Panc1 (cell line): ENCODE measurements at regions of chr7 and their contacts with region 1.

Region 1: DNA sequence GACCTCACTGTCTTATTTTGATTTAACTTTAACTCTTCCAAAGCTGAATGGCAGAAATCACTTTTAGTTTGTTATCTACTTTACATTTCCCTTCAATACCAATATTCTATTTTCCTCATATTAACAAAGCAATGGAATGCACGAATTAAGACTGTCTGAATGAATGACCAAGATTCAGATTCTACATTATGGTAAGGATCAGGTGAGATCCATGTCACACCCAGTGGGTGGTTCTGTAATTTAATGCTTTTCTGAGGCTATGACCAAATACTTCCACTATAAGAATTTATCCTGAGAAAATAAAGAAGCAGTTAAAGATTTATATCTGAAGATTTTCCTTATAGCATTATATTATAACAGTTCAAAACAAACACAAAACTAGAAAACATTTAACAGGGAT is 90.2 kb upstream of the NUPR2 start:
- DNase-seq: no peak
- ATAC-seq: no peak
- H3K4me3 ChIP-seq: no peak overlapping the region
- H3K27ac ChIP-seq: no peak overlapping the region
- H3K4me1 ChIP-seq: no peaks in the 10 kb centered on the region
- H3K27me3 ChIP-seq: 0 out of 2 replicates have a peak, but pooled peaks cover 2% of the 10 kb centered on the region
- CTCF ChIP-seq: no peak

Region 2: DNA sequence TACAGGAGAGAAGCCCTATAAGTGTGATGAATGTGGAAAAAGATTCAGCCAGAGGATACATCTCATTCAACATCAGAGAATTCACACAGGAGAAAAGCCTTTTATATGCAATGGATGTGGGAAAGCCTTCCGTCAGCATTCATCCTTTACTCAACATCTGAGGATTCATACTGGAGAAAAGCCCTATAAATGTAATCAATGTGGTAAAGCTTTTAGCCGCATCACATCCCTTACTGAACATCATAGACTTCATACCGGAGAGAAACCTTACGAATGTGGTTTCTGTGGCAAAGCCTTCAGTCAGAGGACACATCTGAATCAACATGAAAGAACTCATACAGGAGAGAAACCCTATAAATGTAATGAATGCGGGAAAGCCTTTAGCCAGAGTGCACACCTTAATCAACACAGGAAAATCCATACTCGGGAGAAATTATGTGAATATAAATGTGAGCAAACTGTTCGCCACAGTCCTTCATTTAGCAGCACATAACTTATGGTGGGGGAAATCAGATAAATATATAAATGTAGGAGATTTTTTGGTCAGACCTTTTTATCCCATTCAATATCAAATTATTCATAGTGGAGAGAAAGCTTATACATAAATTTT is 266.8 kb before region 1 on chr7:
- CTCF ChIA-PET with region 1: no interaction called
- POLR2A ChIA-PET with region 1: no interaction called
- in situ Hi-C with region 1: no loop called
- intact Hi-C with region 1: no loop called
- DNase-seq: no peak
- ATAC-seq: no peak
- H3K4me3 ChIP-seq: no peak overlapping the region
- H3K27ac ChIP-seq: no peak overlapping the region
- H3K4me1 ChIP-seq: no peaks in the 10 kb centered on the region
- H3K27me3 ChIP-seq: no peaks in the 10 kb centered on the region
- CTCF ChIP-seq: no peak

Region 3: DNA sequence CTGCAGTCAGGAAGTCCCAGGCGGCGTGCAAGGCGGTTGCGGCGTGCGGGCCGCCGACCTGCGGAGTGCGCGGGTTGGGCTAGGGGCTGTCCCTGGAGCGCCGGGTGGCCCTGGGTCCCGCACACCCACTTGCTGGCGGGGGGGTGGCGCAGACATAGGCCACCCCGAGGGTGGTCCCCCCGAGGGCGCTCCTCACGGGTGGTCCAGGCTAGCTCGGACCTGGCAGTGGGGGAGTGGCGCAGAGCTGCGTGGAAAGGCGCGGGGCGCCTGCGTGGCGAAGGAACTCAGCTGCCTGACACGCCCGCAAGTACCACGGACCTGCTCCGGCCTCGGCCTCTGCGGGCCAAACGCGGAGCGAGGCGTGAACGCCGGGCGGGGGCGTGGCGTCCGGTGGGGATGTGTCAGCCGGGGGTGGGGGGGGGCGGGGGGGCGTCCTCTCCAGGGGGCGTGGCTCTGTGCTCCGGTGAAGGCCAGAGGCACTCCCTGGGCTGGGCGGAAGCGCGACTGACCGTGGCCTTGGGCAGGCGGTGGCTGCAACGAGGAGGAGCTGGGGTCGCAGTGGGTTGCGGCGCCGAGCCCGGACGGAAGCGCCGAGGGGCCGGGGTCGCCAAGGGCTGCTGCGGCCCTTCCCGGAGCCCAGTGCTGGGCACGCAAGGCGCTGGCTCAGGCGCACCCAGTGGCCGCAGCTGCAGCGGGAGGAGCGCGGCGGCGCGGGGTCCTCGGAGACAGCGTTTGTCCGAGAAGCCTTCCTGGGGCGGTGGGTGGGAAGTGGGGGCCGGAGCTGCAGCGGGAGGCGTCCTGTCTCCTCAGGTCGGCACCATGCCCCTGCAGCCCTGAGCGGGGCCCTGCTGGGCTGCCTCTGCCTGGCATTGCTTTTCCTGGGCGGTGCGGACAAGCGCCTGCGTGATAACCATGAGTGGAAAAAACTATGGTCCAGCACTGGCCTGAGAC is 31.3 kb before region 1 on chr7:
- CTCF ChIA-PET with region 1: no interaction called
- POLR2A ChIA-PET with region 1: no interaction called
- in situ Hi-C with region 1: no loop called
- intact Hi-C with region 1: no loop called
- DNase-seq: no peak
- ATAC-seq: no peak
- H3K4me3 ChIP-seq: no peak overlapping the region
- H3K27ac ChIP-seq: no peak overlapping the region
- H3K4me1 ChIP-seq: no peaks in the 10 kb centered on the region
- H3K27me3 ChIP-seq: peaks cover 4% of the 10 kb centered on the region; the same call in 1 of the 2 replicates
- CTCF ChIP-seq: no peak

Region 4: GRCh38 chr7:57300747-57301146 is 1094.3 kb after region 1 on chr7:
- CTCF ChIA-PET with region 1: no interaction called
- POLR2A ChIA-PET with region 1: interaction called, 10 read pairs
- in situ Hi-C with region 1: no loop called
- intact Hi-C with region 1: no loop called
- DNase-seq: no peak
- ATAC-seq: no peak
- H3K4me3 ChIP-seq: no peak overlapping the region
- H3K27ac ChIP-seq: no peak overlapping the region
- H3K4me1 ChIP-seq: no peaks in the 10 kb centered on the region
- H3K27me3 ChIP-seq: no peaks in the 10 kb centered on the region
- CTCF ChIP-seq: no peak